ENCODE measurements at regions of chr12 and their contacts with region 1.

Region 1: DNA sequence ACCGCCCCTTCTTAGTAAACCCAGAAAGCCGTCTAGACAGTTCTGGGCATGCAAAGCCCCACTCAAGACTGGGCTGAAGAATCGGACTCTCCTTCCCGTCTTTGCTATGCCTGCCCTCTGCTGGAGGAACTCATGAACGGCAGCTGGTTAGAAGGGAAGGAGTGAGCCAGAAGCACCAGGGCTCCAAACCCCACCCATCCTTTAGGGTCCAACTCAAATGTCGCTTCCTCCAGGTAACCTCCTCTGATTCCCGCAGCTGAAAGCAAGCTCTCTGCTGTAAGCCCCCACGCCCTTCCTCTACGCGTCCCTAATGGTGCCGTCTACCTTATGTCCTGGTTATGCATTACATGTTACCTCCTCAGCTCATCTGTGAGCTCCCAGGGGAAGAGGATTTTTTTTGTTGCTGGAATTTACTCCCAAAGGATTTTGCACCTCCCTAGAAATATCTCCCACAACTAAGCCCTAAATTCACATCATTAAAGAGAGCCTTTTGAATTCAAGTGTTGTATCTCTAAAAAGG is 59.0 kb upstream of the SCN8A start:
- DNase-seq: peak; percentile 71
- H3K4me3 ChIP-seq: no peak overlapping the region
- H3K27ac ChIP-seq: no peak overlapping the region
- H3K4me1 ChIP-seq: no peaks in the 10 kb centered on the region
- CTCF ChIP-seq: peak; percentile 89

Region 2: GRCh38 chr12:51374361-51374760 is 157.7 kb before region 1 on chr12:
- CTCF ChIA-PET with region 1: no interaction called
- POLR2A ChIA-PET with region 1: no interaction called
- intact Hi-C with region 1: loop called (anchors 2 kb)
- DNase-seq: no peak
- H3K4me3 ChIP-seq: no peak overlapping the region
- H3K27ac ChIP-seq: no peak overlapping the region
- H3K4me1 ChIP-seq: peaks cover 4% of the 10 kb centered on the region
- CTCF ChIP-seq: no peak

Region 3: DNA sequence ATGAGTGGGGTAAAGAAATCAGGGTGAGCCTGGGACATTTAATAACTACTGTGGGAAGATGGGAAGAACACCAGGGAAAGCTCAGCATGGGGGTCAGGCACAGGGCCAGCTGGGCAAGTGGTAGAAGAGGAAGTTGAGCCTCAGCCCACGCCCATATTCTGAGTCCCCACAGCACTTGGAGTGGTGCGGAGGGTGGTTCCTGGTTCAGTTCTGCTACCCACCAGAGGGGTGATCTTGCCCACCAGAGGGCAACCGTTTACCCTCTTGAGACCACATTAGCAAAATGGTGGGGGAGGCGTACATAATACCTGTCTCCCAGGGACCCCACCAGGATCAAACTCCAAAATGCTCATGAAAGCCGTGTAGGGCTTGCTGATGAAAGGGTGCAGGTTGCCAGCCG is 339.1 kb after region 1 on chr12:
- CTCF ChIA-PET with region 1: no interaction called
- POLR2A ChIA-PET with region 1: no interaction called
- intact Hi-C with region 1: loop called (anchors 10 kb)
- DNase-seq: no peak
- H3K4me3 ChIP-seq: no peak overlapping the region
- H3K27ac ChIP-seq: no peak overlapping the region
- H3K4me1 ChIP-seq: no peaks in the 10 kb centered on the region
- CTCF ChIP-seq: peak; percentile 26; the same call in 1 of the 2 replicates